Astrocyte of the cerebellum (primary cell): ENCODE measurements at regions of chr16 and their contacts with region 1.

Region 1: GRCh38 chr16:30395155-30395991 is at the start of gene ZNF48:
- DNase-seq: peak; percentile 77
- H3K4me3 ChIP-seq: peak within 1 kb of the TSS; percentile 70
- CTCF ChIP-seq: peak; percentile 9

Region 2: DNA sequence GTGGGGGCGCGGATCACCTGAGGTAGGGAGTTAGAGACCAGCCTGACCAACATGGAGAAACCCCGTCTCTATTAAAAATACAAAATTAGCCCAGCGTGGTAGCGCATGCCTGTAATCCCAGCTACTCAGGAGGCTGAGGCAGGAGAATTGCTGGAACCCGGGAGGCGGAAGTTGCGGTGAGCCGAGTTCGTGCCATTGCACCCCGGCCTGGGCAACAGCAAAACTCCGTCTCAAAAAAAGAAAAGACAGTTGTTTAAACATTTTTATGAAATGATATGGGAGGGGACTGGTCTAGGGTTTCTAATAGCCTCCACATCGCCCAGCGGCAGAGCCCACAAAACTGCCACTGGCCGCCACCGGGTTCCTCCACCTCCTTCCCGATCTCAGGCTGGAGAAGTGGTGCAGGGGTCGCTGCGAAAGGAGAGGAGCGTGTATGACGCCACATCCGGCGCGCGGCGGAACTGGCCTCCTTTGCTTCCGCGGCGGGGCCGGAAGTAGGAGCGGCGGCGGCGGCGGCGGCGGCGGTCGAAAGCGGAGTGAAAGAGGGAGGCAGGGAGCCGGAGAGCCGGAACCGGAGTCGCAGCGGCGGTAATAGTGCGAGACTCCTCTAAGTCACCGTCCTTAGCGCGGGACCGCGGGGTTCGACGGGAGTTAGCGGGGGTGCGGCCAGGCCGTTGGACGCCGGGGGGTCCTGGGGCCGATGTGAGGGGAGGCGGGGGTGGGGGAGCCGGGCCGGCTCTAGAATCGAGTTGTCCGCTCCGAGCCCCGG is 319.7 kb before region 1 on chr16 and contains the start of gene PPP4C:
- in situ Hi-C with region 1: loop called (anchors 10 kb)
- DNase-seq: peak; percentile 62
- H3K4me3 ChIP-seq: peak within 1 kb of the TSS; percentile 97
- CTCF ChIP-seq: no peak